ENCODE measurements at regions of chr7 and their contacts with region 1.

Region 1: GRCh38 chr7:76155938-76156337 is 45.8 kb upstream of the SRRM3 start:
- DNase-seq: no peak
- H3K4me3 ChIP-seq: no peak overlapping the region
- H3K27ac ChIP-seq: no peak overlapping the region
- H3K4me1 ChIP-seq: no peaks in the 10 kb centered on the region
- H3K27me3 ChIP-seq: no peaks in the 10 kb centered on the region
- CTCF ChIP-seq: no peak
- EP300 ChIP-seq: no peak
- POLR2A ChIP-seq: no peak
- RAD21 ChIP-seq: no peak

Region 2: DNA sequence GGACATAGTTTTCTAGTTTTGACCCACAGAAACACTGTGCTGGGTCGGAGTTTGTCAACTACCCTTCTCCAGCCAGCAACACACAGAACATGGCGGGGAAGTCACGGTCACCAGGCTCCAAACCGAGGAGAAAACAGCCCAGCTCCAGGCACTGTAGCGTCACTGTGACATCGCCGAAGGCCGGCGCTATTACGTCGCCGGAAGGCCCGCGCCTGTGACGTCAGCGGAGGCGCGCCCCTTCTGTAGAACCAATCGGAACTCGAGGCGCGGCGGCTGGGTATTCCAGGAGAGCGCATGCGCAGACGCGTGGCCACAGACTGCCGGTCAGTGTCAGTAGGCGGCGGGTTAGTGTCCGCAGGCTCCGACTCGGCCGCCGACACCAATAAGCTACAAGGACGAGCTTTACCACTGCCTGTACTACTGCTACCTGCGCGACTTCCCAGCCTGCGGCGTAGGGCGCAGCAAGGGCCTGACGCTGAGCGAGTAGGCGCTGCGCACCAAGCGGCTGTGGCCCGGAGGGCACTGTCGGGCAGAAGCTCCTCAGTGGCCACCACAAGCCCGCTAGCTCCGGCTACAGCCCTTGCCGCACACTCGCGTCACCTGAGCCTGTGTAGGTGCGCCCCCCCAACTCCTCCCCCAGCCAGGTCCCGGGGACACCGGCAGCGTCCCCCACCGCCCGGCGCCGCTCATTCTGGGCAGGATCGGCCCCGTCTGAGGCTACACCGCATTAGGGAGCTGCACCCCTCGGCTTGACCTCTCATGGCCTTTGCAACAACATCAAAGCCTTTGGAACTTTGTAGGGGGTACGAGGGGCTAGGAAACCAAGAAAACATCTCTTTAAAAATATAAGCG is 10.7 kb after region 1 on chr7:
- CTCF ChIA-PET with region 1: interaction called, 4 read pairs
- POLR2A ChIA-PET with region 1: interaction called, 11 read pairs
- DNase-seq: peak; percentile 87 to 99
- H3K4me3 ChIP-seq: peak overlapping the region; percentile 54 to 69 (median 56)
- H3K27ac ChIP-seq: peak overlapping the region; percentile 87
- H3K4me1 ChIP-seq: peaks cover 2 to 17% (median 9%) of the 10 kb centered on the region in 4 experiments
- H3K27me3 ChIP-seq: no peaks in the 10 kb centered on the region
- CTCF ChIP-seq: no peak
- EP300 ChIP-seq: peak in 1 of 2 experiments; percentile 68; a peak in 1 of 3 replicates
- POLR2A ChIP-seq: peak; percentile 49 to 86
- RAD21 ChIP-seq: peak in 1 of 2 experiments; percentile 14; a peak in 2 of 4 replicates